ENCODE measurements at regions of chr2 and their contacts with region 1.

Region 1: GRCh38 chr2:23566236-23567142 is 181.5 kb downstream of the KLHL29 start:
- DNase-seq: no peak
- H3K4me3 ChIP-seq: no peak overlapping the region
- H3K27ac ChIP-seq: no peak overlapping the region
- H3K4me1 ChIP-seq: no peaks in the 10 kb centered on the region
- H3K27me3 ChIP-seq: no peaks in the 10 kb centered on the region
- CTCF ChIP-seq: peak; percentile 19

Region 2: GRCh38 chr2:23207871-23208270 is 358.6 kb before region 1 on chr2:
- intact Hi-C with region 1: no loop called
- DNase-seq: peak; percentile 38
- H3K4me3 ChIP-seq: no peak overlapping the region
- H3K27ac ChIP-seq: peak overlapping the region; percentile 73
- H3K4me1 ChIP-seq: no peaks in the 10 kb centered on the region
- H3K27me3 ChIP-seq: no peaks in the 10 kb centered on the region
- CTCF ChIP-seq: no peak

Region 3: DNA sequence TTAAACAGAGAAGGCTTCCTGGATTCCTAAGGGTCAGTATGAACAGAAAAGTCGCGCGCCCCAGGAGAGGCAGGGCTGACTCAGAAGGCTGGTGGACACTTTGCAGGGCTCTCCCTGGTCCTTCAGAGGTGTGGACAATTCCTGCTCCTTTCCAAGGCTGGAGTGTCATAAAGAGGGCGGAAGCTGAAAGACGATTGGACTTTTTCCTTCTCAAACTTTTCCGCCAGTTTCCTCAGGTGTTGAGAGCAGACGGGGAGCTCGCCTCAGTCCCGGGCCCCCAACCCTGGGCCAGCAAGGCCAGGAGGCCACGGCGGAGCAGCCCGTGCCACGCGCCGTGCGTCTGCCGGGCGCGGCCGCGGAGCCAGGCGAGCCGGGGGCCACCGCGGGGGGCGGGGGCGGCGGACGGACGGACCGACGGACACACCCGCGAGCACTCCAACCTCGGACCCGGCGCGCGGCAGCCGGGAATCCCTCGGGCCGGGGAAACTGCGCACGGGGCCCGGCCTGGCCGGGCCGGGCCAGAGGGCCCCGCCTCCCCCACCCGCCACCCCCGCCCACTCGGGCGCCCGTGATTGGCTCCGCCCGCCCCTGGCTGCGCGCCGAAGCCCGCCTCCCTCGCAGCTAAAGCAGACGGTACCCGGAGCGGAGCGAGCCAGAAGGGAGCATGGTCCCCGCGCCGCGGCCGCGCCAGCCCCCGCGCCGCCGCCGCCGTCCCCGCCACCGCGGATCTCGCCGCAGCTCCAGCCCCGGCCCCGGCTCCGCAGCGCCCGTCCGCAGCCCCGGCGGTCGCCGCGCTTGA is 181.7 kb before region 1 on chr2 and contains the start of gene KLHL29:
- intact Hi-C with region 1: loop called (anchors 10 kb)
- DNase-seq: peak; percentile 90
- H3K4me3 ChIP-seq: peak within 1 kb of the TSS; percentile 69
- H3K27ac ChIP-seq: peak within 1 kb of the TSS; percentile 50
- H3K4me1 ChIP-seq: no peaks in the 10 kb centered on the region
- H3K27me3 ChIP-seq: peaks cover 12% of the 10 kb centered on the region
- CTCF ChIP-seq: no peak
- total RNA-seq, gene KLHL29: 2.0 to 2.9 TPM